BJ (cell line): ENCODE measurements at regions of chr15 and their contacts with region 1.

Region 1: GRCh38 chr15:90320061-90320884 is 31.8 kb upstream of the ZNF774 start:
- DNase-seq: peak; percentile 39
- H3K4me3 ChIP-seq: no peak overlapping the region
- H3K27me3 ChIP-seq: no peaks in the 10 kb centered on the region
- CTCF ChIP-seq: peak; percentile 98

Region 2: DNA sequence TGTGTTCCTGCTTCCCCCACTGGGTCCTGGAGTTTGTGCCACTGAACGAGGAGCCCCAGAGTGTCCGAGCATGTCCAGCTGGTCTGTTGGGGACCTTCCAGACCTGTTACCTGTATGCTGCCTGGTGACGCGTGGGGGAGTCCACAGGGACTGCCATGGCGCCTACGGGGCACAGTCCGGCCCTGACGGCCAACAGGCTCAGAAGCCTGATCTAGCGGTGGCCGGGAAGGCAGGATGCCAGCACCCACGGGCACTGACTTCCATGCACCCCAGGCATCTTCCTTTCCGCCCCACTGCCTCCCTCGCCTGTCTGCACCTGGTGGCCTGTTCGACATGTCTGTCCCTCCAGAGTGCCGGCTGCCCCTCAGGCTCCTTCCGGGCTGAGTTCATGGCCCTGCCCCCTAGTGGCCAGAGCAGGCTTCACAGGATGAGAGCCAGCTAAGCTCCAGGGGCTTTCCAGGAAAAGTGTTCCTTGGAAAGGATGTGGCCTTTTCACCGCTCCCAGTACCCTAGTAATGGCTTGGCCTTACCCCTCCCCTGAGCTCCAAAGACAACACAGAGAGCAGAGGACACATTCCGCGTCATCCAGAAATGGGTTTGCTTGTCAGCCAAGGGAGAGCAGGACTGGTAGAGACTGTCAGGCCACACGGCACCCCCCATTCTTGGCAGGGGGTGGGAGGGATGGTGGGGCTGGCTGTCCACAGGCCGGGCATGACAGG is 19.1 kb before region 1 on chr15:
- CTCF ChIA-PET with region 1: interaction called, 39 read pairs
- POLR2A ChIA-PET with region 1: interaction called, 6 read pairs
- DNase-seq: no peak
- H3K4me3 ChIP-seq: no peak overlapping the region
- H3K27me3 ChIP-seq: no peaks in the 10 kb centered on the region
- CTCF ChIP-seq: peak; percentile 90

Region 3: DNA sequence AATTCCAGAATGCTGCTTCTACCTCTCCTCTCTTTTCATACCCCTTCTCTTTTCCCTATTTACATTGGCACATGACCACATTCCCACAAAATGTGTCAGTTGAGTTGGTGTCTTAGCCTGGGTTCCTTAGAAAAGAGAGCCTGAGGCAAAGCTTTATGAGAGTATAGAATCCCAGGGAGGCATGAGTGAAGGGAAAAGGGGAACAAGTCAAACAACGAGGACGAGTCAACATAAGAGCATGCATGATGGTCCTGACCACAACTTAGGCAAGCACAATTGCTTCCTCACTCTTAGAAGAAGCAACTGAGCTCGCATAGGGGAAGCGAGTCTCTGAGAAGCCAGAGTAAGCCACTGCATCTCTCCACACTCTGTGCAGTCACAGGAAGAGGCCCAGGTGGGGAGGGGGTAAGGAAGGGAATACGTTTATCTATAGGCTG is 16.4 kb after region 1 on chr15:
- CTCF ChIA-PET with region 1: interaction called, 18 read pairs
- POLR2A ChIA-PET with region 1: no interaction called
- DNase-seq: peak; percentile 63
- H3K4me3 ChIP-seq: no peak overlapping the region
- H3K27me3 ChIP-seq: no peaks in the 10 kb centered on the region
- CTCF ChIP-seq: no peak

Region 4: GRCh38 chr15:90376789-90377188 is 56.5 kb after region 1 on chr15:
- CTCF ChIA-PET with region 1: interaction called, 14 read pairs
- POLR2A ChIA-PET with region 1: no interaction called
- DNase-seq: no peak
- H3K4me3 ChIP-seq: no peak overlapping the region
- H3K27me3 ChIP-seq: no peaks in the 10 kb centered on the region
- CTCF ChIP-seq: no peak

Region 5: DNA sequence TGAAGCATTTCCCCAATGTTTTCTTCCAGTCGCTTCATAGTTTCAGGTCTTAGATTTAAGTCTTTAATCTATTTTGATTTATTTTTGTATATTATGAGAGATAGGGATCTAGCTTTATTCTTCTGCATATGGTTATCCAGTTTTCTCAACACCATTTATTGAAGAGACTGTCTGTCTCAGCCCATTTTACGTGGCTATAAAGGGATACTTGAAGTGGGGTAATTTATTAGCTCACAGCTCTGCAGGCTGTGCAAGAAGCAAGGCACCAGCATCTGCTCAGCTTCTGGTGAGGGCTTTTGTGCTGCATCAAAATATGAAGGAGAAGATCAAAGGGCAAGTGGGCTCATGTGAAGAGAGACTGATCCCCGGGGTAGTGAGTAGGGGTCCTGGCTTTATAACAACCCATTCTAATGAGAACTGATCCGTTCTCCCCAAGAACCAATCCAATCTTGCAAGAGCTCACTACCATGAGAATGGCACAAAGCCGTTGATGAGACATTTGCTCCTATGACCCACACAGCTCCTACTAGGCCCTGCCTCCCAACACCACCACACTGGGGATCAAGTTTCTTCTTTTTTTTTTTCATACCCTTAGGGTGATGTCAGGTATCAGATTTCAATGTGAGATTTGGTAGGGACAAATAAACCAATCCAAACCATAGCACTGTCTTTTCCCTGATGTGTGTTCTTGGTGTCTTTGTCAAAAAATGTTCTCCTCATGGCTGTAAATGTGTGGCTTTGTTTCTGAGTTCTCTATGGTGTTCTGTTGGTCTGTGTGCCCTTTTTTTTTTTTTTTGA is 131.0 kb after region 1 on chr15:
- CTCF ChIA-PET with region 1: interaction called, 10 read pairs
- POLR2A ChIA-PET with region 1: no interaction called
- DNase-seq: peak; percentile 20
- H3K4me3 ChIP-seq: no peak overlapping the region
- H3K27me3 ChIP-seq: no peaks in the 10 kb centered on the region
- CTCF ChIP-seq: no peak

Region 6: GRCh38 chr15:90482124-90483011 is 162.1 kb after region 1 on chr15:
- CTCF ChIA-PET with region 1: interaction called, 169 read pairs
- POLR2A ChIA-PET with region 1: no interaction called
- DNase-seq: peak; percentile 18
- H3K4me3 ChIP-seq: no peak overlapping the region
- H3K27me3 ChIP-seq: no peaks in the 10 kb centered on the region
- CTCF ChIP-seq: peak; percentile 76

Region 7: DNA sequence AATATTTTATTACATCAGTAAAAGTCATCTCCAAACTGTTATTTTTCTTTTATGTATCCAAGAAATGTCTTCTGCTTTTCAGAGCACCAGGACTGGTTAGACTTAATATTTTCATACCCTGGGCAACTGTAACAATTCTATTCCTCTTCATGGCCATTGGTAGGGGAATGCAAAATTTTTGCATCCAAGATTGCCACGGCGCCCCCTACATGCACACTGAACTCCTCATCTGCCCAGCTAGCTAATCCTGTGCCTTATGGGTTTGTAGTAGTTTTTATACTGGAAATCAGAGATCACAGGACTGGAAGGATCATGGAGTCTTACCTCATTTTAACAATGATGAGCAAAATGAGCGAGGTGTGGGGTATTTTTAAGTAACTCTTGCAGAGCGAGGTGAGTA is 283.6 kb after region 1 on chr15:
- CTCF ChIA-PET with region 1: interaction called, 13 read pairs
- POLR2A ChIA-PET with region 1: no interaction called
- DNase-seq: no peak
- H3K4me3 ChIP-seq: no peak overlapping the region
- H3K27me3 ChIP-seq: no peaks in the 10 kb centered on the region
- CTCF ChIP-seq: peak; percentile 45

Region 8: GRCh38 chr15:91393186-91393585 is 1072.9 kb after region 1 on chr15:
- CTCF ChIA-PET with region 1: no interaction called
- POLR2A ChIA-PET with region 1: no interaction called
- DNase-seq: no peak
- H3K4me3 ChIP-seq: no peak overlapping the region
- H3K27me3 ChIP-seq: no peaks in the 10 kb centered on the region
- CTCF ChIP-seq: no peak